ENCODE measurements at regions of chr18 and their contacts with region 1.

Region 1: DNA sequence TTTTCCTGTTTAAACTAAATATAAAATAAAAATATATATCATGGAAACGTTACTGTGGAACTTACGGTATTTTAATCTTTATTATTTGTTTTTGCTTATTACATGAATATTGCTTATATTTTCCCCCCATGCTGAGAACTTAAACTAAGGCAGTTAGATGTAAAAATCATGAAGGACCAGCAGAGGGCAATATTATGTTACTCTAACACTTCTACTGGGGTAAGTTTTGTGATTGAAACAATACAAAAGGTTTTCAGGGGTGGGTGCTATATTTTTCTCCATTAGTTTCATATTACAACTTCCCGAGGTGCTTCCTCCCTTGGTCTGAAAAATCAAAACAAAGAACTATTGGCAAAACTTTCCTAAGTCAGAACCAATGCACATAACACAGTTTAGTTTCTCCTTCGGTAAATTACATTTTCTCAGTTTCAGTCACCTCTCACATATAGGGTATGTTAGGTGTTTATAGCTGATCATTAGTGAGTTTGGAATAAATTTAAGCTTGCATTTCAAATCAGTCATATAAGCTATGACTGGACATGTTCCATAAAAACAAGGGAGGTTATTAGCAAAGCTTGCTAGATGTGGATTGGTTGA is 54.8 kb downstream of the ZNF407 start:
- DNase-seq: peak; percentile 27
- ATAC-seq: peak; percentile 69
- H3K4me3 ChIP-seq: no peak overlapping the region
- H3K27ac ChIP-seq: no peak overlapping the region
- H3K4me1 ChIP-seq: no peaks in the 10 kb centered on the region
- H3K27me3 ChIP-seq: no peaks in the 10 kb centered on the region
- CTCF ChIP-seq: peak; percentile 44 to 64 (median 59); a peak in 5 of 6 replicates
- POLR2A ChIP-seq: no peak
- RAD21 ChIP-seq: peak; percentile 70

Region 2: GRCh38 chr18:74623047-74623816 is 29.3 kb before region 1 on chr18:
- CTCF ChIA-PET with region 1: no interaction called
- POLR2A ChIA-PET with region 1: no interaction called
- RAD21 ChIA-PET with region 1: no interaction called
- intact Hi-C with region 1: no loop called
- DNase-seq: peak; percentile 10
- ATAC-seq: no peak; the same call in 1 of the 2 replicates
- H3K4me3 ChIP-seq: no peak overlapping the region
- H3K27ac ChIP-seq: no peak overlapping the region
- H3K4me1 ChIP-seq: no peaks in the 10 kb centered on the region
- H3K27me3 ChIP-seq: no peaks in the 10 kb centered on the region
- CTCF ChIP-seq: peak in 2 of 3 experiments; percentile 36 to 56; a peak in 4 of 6 replicates
- POLR2A ChIP-seq: no peak
- RAD21 ChIP-seq: peak; percentile 55

Region 3: DNA sequence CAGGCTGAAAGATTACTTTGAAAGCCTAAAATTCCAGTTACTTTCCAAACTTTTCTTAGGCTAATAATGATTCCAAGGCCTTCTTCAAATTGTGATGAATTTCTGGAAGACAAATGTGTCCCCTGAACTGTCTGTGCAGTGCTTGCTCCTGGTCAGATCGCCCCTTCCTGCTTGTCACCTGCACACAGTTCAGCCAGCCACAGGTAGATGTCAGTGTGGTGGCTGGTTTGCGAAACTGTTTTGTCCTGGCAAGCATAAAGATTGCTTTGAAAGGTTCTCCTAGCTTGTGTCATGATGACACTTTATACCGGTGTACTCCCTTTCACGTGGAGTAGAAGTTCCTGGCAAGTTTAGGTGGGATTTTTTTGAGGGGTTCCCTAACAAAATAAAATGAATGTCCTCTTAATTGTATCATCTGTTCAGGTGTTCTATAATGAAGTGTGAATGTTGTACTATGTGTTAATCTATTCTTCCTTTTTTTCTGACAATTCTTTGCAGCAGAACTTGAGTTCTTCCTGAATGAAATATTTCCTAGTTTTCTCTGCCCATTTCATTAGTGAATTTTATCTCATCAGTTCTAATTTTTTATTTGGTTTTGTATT is 244.0 kb after region 1 on chr18:
- CTCF ChIA-PET with region 1: no interaction called
- POLR2A ChIA-PET with region 1: no interaction called
- RAD21 ChIA-PET with region 1: no interaction called
- intact Hi-C with region 1: loop called (anchors 10 kb)
- DNase-seq: peak; percentile 51
- ATAC-seq: peak; percentile 99
- H3K4me3 ChIP-seq: no peak overlapping the region
- H3K27ac ChIP-seq: no peak overlapping the region
- H3K4me1 ChIP-seq: peaks cover 3 to 9% of the 10 kb centered on the region in 2 experiments; a peak in 3 of 4 replicates
- H3K27me3 ChIP-seq: no peaks in the 10 kb centered on the region
- CTCF ChIP-seq: peak; percentile 37 to 78 (median 75); a peak in 5 of 6 replicates
- POLR2A ChIP-seq: no peak
- RAD21 ChIP-seq: peak; percentile 67

Region 4: GRCh38 chr18:75041586-75041985 is 389.1 kb after region 1 on chr18:
- CTCF ChIA-PET with region 1: interaction called, 8 read pairs
- POLR2A ChIA-PET with region 1: no interaction called
- RAD21 ChIA-PET with region 1: no interaction called
- intact Hi-C with region 1: loop called (anchors 2 kb)
- DNase-seq: peak; percentile 23
- ATAC-seq: peak; percentile 86
- H3K4me3 ChIP-seq: no peak overlapping the region
- H3K27ac ChIP-seq: no peak overlapping the region
- H3K4me1 ChIP-seq: no peaks in the 10 kb centered on the region
- H3K27me3 ChIP-seq: no peaks in the 10 kb centered on the region
- CTCF ChIP-seq: peak; percentile 34 to 66 (median 39); a peak in 4 of 6 replicates
- POLR2A ChIP-seq: no peak
- RAD21 ChIP-seq: peak; percentile 44

Region 5: GRCh38 chr18:75478996-75479880 is 826.7 kb after region 1 on chr18:
- CTCF ChIA-PET with region 1: no interaction called
- POLR2A ChIA-PET with region 1: no interaction called
- RAD21 ChIA-PET with region 1: no interaction called
- intact Hi-C with region 1: loop called (anchors 1 kb)
- DNase-seq: peak; percentile 51
- ATAC-seq: peak; percentile 96
- H3K4me3 ChIP-seq: no peak overlapping the region
- H3K27ac ChIP-seq: no peak overlapping the region
- H3K4me1 ChIP-seq: peaks cover 0 to 10% of the 10 kb centered on the region in 2 experiments; a peak in 1 of 4 replicates
- H3K27me3 ChIP-seq: no peaks in the 10 kb centered on the region
- CTCF ChIP-seq: peak; percentile 54 to 78 (median 61); a peak in 5 of 6 replicates
- POLR2A ChIP-seq: no peak
- RAD21 ChIP-seq: peak; percentile 80

Region 6: DNA sequence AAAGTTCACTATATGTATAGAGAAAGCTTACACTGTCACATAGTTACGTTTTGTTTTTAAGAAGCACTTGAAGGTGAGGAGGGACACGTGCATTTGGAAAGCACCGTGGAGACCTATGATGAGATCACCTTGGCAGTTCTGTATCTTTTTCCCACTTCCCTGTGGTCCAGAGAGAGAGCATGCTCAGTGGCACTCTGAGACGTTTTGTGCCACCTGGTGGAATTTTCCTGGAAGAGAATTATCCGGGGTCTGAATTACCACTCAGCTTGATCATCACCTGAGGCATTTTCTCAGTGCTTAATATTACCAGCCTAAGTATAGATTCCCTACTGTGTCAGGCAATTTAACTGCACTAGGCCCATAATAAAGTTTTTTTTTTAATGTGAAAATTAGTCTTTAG is 1244.4 kb after region 1 on chr18:
- CTCF ChIA-PET with region 1: no interaction called
- POLR2A ChIA-PET with region 1: no interaction called
- RAD21 ChIA-PET with region 1: no interaction called
- intact Hi-C with region 1: loop called (anchors 10 kb)
- DNase-seq: peak; percentile 22
- ATAC-seq: peak; percentile 80
- H3K4me3 ChIP-seq: no peak overlapping the region
- H3K27ac ChIP-seq: no peak overlapping the region
- H3K4me1 ChIP-seq: no peaks in the 10 kb centered on the region
- H3K27me3 ChIP-seq: no peaks in the 10 kb centered on the region
- CTCF ChIP-seq: peak in 2 of 3 experiments; percentile 31 to 41; a peak in 4 of 6 replicates
- POLR2A ChIP-seq: no peak
- RAD21 ChIP-seq: peak; percentile 40; the same call in 1 of the 2 replicates

Region 7: DNA sequence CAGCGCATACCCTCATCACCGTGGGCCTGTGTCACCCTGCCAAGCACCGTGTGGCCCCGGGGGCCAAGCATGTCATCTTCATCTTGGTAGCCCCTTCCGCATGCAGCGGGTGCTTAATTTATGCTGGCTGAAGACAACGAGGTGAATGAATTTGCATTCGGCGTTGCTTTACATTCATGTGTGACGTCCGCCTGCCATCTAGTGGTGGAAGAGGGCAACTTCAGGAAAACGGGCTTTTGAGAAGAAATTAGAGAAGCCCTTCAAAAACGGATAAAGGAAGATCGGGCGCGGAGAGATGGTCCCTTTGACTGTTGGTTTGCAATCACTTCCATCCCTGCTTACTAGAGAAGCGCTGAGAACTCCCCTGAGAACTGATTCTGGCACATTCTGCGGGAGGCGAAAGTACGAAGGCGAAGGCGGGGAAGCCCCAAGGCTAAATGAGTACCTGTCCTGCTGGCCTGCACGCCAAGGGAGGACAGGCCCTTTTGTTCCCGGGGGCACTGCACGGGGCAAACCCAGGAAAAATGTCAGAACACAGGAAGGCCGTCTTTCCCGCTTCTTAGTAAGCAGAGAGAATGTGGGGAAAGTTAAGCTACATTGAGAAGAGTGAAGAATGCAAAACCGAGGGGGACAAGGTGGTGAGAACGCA is 1696.7 kb after region 1 on chr18:
- CTCF ChIA-PET with region 1: no interaction called
- POLR2A ChIA-PET with region 1: no interaction called
- RAD21 ChIA-PET with region 1: no interaction called
- intact Hi-C with region 1: loop called (anchors 1 kb)
- DNase-seq: peak; percentile 46
- ATAC-seq: peak; percentile 75
- H3K4me3 ChIP-seq: no peak overlapping the region
- H3K27ac ChIP-seq: no peak overlapping the region
- H3K4me1 ChIP-seq: no peaks in the 10 kb centered on the region
- H3K27me3 ChIP-seq: no peaks in the 10 kb centered on the region
- CTCF ChIP-seq: peak; percentile 59 to 91 (median 87); a peak in 5 of 6 replicates
- POLR2A ChIP-seq: no peak
- RAD21 ChIP-seq: peak; percentile 84

Measured in HCT116 (cell line).